ENCODE measurements at regions of chr17 and their contacts with region 1.

Region 1: GRCh38 chr17:73371285-73371684 is 59.5 kb upstream of the CDC42EP4 start:
- DNase-seq: peak; percentile 48
- H3K4me3 Mint-ChIP-seq: no peak overlapping the region
- H3K27ac Mint-ChIP-seq: no peak overlapping the region
- H3K4me1 Mint-ChIP-seq: peaks cover 8% of the 10 kb centered on the region
- H3K27me3 Mint-ChIP-seq: peaks cover 53% of the 10 kb centered on the region
- CTCF ChIP-seq: no peak

Region 2: DNA sequence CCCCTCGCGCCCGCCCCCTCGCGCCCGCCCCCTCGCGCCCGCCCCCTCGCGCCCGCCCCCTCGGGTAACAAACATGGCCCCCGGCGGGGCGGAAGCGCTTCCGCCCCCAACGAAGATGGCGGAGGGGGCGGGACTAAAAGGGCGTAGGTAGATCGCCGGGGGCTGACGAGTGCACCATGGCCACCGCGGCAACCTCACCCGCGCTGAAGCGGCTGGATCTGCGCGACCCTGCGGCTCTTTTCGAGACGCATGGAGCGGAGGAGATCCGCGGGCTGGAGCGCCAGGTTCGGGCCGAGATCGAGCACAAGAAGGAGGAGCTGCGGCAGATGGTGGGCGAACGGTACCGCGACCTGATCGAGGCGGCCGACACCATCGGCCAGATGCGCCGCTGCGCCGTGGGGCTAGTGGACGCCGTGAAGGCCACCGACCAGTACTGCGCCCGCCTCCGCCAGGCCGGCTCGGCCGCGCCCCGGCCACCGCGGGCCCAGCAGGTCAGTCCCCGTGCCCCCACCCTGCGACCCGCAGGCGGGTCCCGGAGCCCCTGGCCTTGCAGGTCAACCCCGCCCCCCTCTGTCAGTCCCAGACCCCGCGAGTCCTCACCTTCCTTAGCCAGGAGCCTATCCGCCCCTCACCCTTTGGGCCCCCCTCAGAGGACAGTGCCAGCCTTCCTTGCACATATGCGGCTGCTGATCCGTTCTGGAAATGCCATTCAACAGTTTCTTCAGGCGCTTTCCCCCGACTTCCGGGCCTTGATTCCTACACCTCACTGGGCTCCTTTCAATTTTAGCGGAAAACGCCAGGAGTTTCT is 178.2 kb before region 1 on chr17 and contains the start of gene COG1:
- CTCF ChIA-PET with region 1: interaction called, 6 read pairs
- POLR2A ChIA-PET with region 1: no interaction called
- intact Hi-C with region 1: loop called (anchors 1 kb)
- DNase-seq: peak; percentile 89
- H3K4me3 Mint-ChIP-seq: peak within 1 kb of the TSS; percentile 95
- H3K27ac Mint-ChIP-seq: peak within 1 kb of the TSS; percentile 93
- H3K4me1 Mint-ChIP-seq: peaks cover 6% of the 10 kb centered on the region
- H3K27me3 Mint-ChIP-seq: no peaks in the 10 kb centered on the region
- CTCF ChIP-seq: no peak
- total RNA-seq, gene COG1: 37.0 and 42.8 TPM in 2 replicates

Region 3: DNA sequence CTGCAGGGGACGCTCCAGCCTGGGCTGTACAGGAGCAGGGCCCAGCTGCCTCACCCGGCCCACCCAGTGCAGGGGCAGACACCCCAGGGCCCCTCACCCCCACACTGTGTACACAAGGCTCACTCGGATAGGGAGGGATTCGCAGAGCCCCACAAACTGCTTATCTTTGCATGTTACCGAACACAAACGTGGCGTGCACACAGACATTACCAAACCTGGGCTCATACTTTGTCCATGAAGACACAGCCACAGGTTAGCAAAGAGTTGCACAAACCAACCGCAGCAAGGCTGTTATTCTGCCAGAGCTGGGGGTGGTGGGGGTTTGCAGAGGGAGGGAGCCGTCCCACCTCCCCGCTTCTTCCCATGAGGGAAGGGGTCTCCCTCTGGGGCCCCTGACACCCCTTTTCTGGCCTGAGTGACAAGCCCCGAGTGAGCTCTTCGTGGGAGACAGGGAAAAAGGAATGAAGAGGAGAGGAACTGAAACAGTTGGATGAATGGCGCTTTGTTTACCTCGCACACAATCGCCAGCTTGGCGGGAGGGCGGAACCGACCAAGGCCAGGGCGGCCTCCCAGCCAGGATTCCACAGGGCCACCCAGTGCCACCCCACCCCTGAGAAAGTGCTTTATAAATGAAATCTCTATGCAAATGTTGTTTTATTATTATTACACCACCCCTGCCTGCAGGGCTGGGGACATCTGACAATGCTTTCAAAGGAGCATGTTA is 109.2 kb before region 1 on chr17:
- CTCF ChIA-PET with region 1: interaction called, 301 read pairs
- POLR2A ChIA-PET with region 1: interaction called, 4 read pairs
- intact Hi-C with region 1: no loop called
- DNase-seq: no peak
- H3K4me3 Mint-ChIP-seq: no peak overlapping the region
- H3K27ac Mint-ChIP-seq: no peak overlapping the region
- H3K4me1 Mint-ChIP-seq: no peaks in the 10 kb centered on the region
- H3K27me3 Mint-ChIP-seq: no peaks in the 10 kb centered on the region
- CTCF ChIP-seq: no peak

Region 4: DNA sequence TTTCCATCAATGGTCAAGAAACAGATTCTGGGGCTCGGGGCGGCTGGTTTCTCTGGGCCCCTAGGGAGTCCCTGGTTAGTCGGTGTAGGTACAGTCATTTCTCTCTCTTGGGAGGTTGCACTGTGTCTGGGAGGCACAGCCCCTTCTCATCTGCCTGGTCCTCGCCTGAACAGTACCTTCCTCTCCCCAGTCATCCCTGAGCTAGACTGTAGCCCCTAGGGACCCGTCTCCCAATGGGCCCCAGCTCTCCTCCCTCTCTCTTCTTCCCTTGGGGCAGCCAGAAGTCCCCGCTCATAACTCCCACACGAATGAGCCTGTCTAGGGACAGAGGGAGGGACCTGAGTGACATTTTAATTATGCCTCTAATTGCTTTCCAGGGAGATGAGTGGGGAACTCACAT is 89.4 kb before region 1 on chr17:
- CTCF ChIA-PET with region 1: interaction called, 12 read pairs
- POLR2A ChIA-PET with region 1: no interaction called
- intact Hi-C with region 1: no loop called
- DNase-seq: no peak
- H3K4me3 Mint-ChIP-seq: no peak overlapping the region
- H3K27ac Mint-ChIP-seq: no peak overlapping the region
- H3K4me1 Mint-ChIP-seq: peaks cover 18% of the 10 kb centered on the region
- H3K27me3 Mint-ChIP-seq: no peaks in the 10 kb centered on the region
- CTCF ChIP-seq: no peak

Region 5: GRCh38 chr17:73311781-73312641 is 59.3 kb before region 1 on chr17 and contains the start of gene CDC42EP4:
- CTCF ChIA-PET with region 1: interaction called, 10 read pairs
- POLR2A ChIA-PET with region 1: interaction called, 3 read pairs
- intact Hi-C with region 1: loop called (anchors 1 kb)
- DNase-seq: peak; percentile 95
- H3K4me3 Mint-ChIP-seq: peak within 1 kb of the TSS; percentile 92
- H3K27ac Mint-ChIP-seq: peak within 1 kb of the TSS; percentile 96
- H3K4me1 Mint-ChIP-seq: peaks cover 17% of the 10 kb centered on the region
- H3K27me3 Mint-ChIP-seq: no peaks in the 10 kb centered on the region
- CTCF ChIP-seq: no peak
- total RNA-seq, gene CDC42EP4: 11.0 and 12.2 TPM in 2 replicates

Measured in MCF 10A (cell line).